ENCODE measurements at regions of chr9 and their contacts with region 1.

Region 1: GRCh38 chr9:70444904-70445303 is 30.4 kb upstream of the KLF9 start:
- DNase-seq: no peak
- ATAC-seq: no peak
- H3K4me3 Mint-ChIP-seq: no peak overlapping the region
- H3K27ac Mint-ChIP-seq: no peak overlapping the region
- H3K4me1 Mint-ChIP-seq: no peaks in the 10 kb centered on the region
- H3K27me3 Mint-ChIP-seq: no peaks in the 10 kb centered on the region
- CTCF ChIP-seq: no peak

Region 2: GRCh38 chr9:70406434-70406862 is 38.5 kb before region 1 on chr9:
- CTCF ChIA-PET with region 1: no interaction called
- POLR2A ChIA-PET with region 1: no interaction called
- intact Hi-C with region 1: no loop called
- DNase-seq: peak; percentile 76
- ATAC-seq: peak; percentile 81
- H3K4me3 Mint-ChIP-seq: peak overlapping the region; percentile 74
- H3K27ac Mint-ChIP-seq: peak overlapping the region; percentile 94
- H3K4me1 Mint-ChIP-seq: peaks cover 81% of the 10 kb centered on the region
- H3K27me3 Mint-ChIP-seq: no peaks in the 10 kb centered on the region
- CTCF ChIP-seq: no peak

Region 3: DNA sequence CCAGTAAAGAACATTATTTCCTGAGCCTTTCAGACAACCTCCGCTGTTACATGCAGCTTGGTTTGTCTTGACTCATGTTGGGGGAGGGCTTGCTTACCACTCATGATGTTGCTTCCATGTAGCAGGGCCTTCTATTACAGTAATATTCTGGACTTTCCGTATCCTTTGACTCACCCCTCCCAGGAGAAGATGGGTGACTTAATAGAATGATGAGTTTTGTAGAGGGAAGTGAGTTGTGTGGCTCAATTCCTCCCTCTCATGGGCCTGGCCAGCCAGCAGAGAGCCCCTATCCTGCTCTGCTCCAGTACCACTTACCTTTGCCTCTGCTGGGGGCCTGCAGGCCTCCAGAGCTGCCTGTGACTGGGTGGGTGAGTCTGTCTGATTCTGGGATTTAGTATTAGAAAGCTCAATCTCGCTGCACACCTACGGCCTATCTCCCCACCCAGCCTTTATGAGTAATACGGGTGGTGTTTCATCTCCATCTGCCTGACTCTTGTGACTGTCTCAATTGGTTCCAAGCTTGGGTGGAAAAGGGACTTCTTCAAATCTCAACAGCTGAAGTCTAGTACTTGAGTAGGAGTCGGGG is 22.2 kb after region 1 on chr9:
- CTCF ChIA-PET with region 1: interaction called, 3 read pairs
- POLR2A ChIA-PET with region 1: no interaction called
- intact Hi-C with region 1: loop called (anchors 2 kb)
- DNase-seq: peak; percentile 42
- ATAC-seq: peak; percentile 85
- H3K4me3 Mint-ChIP-seq: no peak overlapping the region
- H3K27ac Mint-ChIP-seq: peak overlapping the region; percentile 12
- H3K4me1 Mint-ChIP-seq: peaks cover 47% of the 10 kb centered on the region
- H3K27me3 Mint-ChIP-seq: no peaks in the 10 kb centered on the region
- CTCF ChIP-seq: no peak